Sigmoid colon (tissue), 7 donors: ENCODE measurements at regions of chr4 and their contacts with region 1.

Region 1: DNA sequence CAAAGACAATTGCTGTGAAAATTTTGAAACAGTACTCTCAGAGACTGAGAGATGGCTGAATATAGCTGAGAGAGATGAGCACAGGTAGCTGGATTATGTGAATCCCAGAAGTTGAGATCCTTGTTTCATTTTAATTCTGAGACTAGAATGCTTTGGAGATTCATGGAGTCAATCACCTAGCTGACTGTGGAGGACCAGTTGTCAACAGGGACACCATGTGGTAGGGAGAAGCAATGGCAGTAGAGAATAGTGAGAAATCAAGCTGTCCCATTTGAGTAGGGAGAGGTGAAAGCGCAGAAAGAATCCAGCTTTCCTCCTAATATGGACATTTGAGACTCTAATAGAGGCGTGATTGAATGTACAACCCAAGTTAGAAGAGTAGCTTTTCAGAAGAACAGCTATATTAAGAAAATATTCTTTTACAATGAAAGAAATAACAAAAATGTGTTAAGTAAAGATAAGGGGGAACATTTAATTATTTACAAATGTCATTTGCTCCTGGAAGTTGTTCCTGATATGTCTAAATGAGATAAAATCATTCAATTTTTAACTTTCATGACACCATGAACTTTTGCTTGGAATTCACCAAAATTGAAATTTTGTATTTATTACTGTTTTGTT is 30.3 kb upstream of the GLRB start:
- DNase-seq: peak; percentile 66
- H3K4me3 ChIP-seq: no peak overlapping the region
- H3K27ac ChIP-seq: no peak overlapping the region
- H3K4me1 ChIP-seq: peaks cover 0 to 5% (median 0%) of the 10 kb centered on the region in 4 donors
- H3K27me3 ChIP-seq: no peaks in the 10 kb centered on the region
- CTCF ChIP-seq: peak; percentile 41 to 77 (median 64)
- EP300 ChIP-seq: no peak
- POLR2A ChIP-seq: no peak

Region 2: GRCh38 chr4:155403886-155404285 is 1641.7 kb before region 1 on chr4:
- intact Hi-C with region 1: loop called (anchors 10 kb)
- DNase-seq: no peak
- H3K4me3 ChIP-seq: no peak overlapping the region
- H3K27ac ChIP-seq: no peak overlapping the region
- H3K4me1 ChIP-seq: peaks cover 0 to 24% (median 8%) of the 10 kb centered on the region in 4 donors
- H3K27me3 ChIP-seq: no peaks in the 10 kb centered on the region
- CTCF ChIP-seq: peak; percentile 10 to 44 (median 26)
- EP300 ChIP-seq: no peak
- POLR2A ChIP-seq: no peak

Region 3: DNA sequence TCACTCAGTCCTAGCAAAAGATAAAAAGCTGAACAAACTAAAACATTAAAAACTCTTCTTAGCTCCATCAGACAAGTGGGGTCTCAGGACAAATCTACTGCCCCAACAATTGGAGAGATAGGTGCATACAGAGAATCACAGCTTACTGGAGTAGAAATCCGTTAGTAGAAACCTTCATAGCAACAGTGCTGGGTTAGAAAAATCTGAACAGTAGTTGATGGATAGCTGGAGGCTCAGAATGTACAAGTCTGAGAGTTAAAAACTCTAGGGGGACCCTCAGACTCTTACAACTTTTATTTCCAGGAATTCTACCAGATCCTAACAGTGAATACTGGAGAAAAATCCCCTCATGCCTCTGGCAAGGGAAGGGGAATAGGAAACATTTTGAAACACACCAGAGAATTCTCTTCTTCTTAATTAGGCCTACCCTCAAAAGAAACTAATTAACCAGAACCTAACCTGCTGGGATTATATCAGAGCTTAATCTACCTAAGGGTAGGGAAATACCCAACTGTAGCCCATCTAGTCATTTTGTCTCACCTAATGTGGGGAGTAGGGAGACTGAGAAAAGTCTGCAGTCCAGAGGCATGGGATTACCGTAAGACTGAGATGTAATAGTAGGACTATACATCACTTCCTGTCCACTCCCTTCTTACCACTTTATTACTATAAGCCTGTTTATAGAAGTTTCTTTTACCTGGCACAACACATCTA is 927.0 kb before region 1 on chr4:
- intact Hi-C with region 1: loop called (anchors 5 kb)
- DNase-seq: no peak
- H3K4me3 ChIP-seq: no peak overlapping the region
- H3K27ac ChIP-seq: no peak overlapping the region
- H3K4me1 ChIP-seq: peaks cover 0 to 34% (median 23%) of the 10 kb centered on the region in 4 donors
- H3K27me3 ChIP-seq: no peaks in the 10 kb centered on the region
- CTCF ChIP-seq: no peak
- EP300 ChIP-seq: no peak
- POLR2A ChIP-seq: no peak

Region 4: DNA sequence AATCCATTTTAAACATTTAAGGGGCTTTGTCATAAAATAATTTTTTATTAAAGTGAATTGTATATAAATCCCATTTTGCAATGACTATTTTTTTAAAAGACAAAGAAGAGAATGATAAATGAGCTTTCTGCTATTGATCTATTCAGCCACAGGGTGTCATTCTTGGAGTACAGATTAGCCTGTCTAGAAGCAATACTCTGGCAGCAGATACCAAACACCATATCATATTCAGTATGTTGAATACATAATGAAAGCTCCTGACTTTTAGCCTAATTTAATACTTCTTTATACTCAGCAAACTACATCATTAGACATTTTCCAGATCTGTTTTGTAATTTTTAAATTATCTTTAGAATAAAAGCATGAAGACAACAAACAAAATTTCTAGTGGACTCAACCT is 570.3 kb before region 1 on chr4:
- intact Hi-C with region 1: loop called (anchors 5 kb)
- DNase-seq: no peak
- H3K4me3 ChIP-seq: no peak overlapping the region
- H3K27ac ChIP-seq: no peak overlapping the region
- H3K4me1 ChIP-seq: no peaks in the 10 kb centered on the region
- H3K27me3 ChIP-seq: no peaks in the 10 kb centered on the region
- CTCF ChIP-seq: peak in 2 of 4 experiments; percentile 18 to 33
- EP300 ChIP-seq: no peak
- POLR2A ChIP-seq: no peak

Region 5: GRCh38 chr4:156968479-156968984 is 77.1 kb before region 1 on chr4:
- intact Hi-C with region 1: loop called (anchors 2 kb)
- DNase-seq: peak; percentile 82
- H3K4me3 ChIP-seq: peak overlapping the region; percentile 4 to 90 (median 87)
- H3K27ac ChIP-seq: peak overlapping the region; percentile 90 to 94 (median 92)
- H3K4me1 ChIP-seq: peaks cover 0 to 48% (median 30%) of the 10 kb centered on the region in 4 donors
- H3K27me3 ChIP-seq: no peaks in the 10 kb centered on the region
- CTCF ChIP-seq: peak; percentile 56 to 85 (median 79)
- EP300 ChIP-seq: no peak
- POLR2A ChIP-seq: no peak

Region 6: GRCh38 chr4:157080605-157081004 is 35.0 kb after region 1 on chr4:
- intact Hi-C with region 1: no loop called
- DNase-seq: no peak
- H3K4me3 ChIP-seq: no peak overlapping the region
- H3K27ac ChIP-seq: no peak overlapping the region
- H3K4me1 ChIP-seq: peaks cover 0 to 2% (median 0%) of the 10 kb centered on the region in 4 donors
- H3K27me3 ChIP-seq: no peaks in the 10 kb centered on the region
- CTCF ChIP-seq: no peak
- EP300 ChIP-seq: no peak
- POLR2A ChIP-seq: no peak

Region 7: DNA sequence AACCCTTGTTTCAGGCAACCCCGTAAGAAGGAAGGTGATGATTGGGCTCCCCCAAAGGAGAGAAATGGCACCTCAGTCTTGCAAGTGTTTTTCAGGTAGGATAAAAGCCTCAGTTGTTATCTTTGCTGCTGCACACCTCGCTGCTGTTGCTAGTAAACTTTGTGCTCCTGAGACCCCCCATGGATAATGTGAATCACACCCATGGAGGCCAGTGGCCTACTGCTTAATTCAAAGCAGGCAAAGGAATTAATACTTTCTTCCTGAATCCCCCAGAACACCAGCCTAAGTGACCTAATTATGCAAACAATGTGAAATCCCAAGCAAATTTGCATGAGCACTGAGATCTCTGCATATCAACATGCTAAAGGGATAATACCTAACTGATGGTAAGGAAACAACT is 512.4 kb after region 1 on chr4:
- intact Hi-C with region 1: no loop called
- DNase-seq: no peak
- H3K4me3 ChIP-seq: no peak overlapping the region
- H3K27ac ChIP-seq: no peak overlapping the region
- H3K4me1 ChIP-seq: no peaks in the 10 kb centered on the region
- H3K27me3 ChIP-seq: no peaks in the 10 kb centered on the region
- CTCF ChIP-seq: no peak
- EP300 ChIP-seq: no peak
- POLR2A ChIP-seq: no peak